ENCODE measurements at regions of chr16 and their contacts with region 1.

Region 1: GRCh38 chr16:4846891-4847773 is at the starts of genes GLYR1 and UBN1:
- DNase-seq: peak; percentile 95
- H3K4me3 ChIP-seq: peak within 1 kb of the TSS; percentile 82 to 93 (median 84)
- H3K27ac ChIP-seq: peak within 1 kb of the TSS; percentile 96 to 99 (median 98)
- H3K4me1 ChIP-seq: peaks cover 27 to 64% (median 44%) of the 10 kb centered on the region in 3 donors
- H3K27me3 ChIP-seq: no peaks in the 10 kb centered on the region
- CTCF ChIP-seq: peak in 1 of 6 experiments; percentile 13
- POLR2A ChIP-seq: peak in 3 of 4 donors; percentile 74 to 88 (median 85)
- total RNA-seq, gene GLYR1: 31.9 to 47.9 (median 45.8) TPM
- total RNA-seq, gene UBN1: 12.3 to 22.7 (median 19.6) TPM

Region 2: GRCh38 chr16:4944333-4945281 is 97.5 kb after region 1 on chr16:
- intact Hi-C with region 1: loop called (anchors 5 kb)
- DNase-seq: no peak
- H3K4me3 ChIP-seq: peak overlapping the region in 3 of 4 donors; percentile 9 to 25 (median 10)
- H3K27ac ChIP-seq: peak overlapping the region; percentile 89 to 98 (median 94)
- H3K4me1 ChIP-seq: peaks cover 47 to 96% (median 54%) of the 10 kb centered on the region in 3 donors
- H3K27me3 ChIP-seq: no peaks in the 10 kb centered on the region
- CTCF ChIP-seq: no peak
- POLR2A ChIP-seq: no peak

Measured in esophagus squamous epithelium (tissue), 5 donors.